K562 (cell line): ENCODE measurements at regions of chr2 and their contacts with region 1.

Region 1: GRCh38 chr2:15577071-15577735 is 14.5 kb upstream of the DDX1 start:
- DNase-seq: peak; percentile 69 to 94 (median 74)
- ATAC-seq: peak; percentile 97
- H3K4me3 ChIP-seq: no peak overlapping the region
- H3K27ac ChIP-seq: no peak overlapping the region
- H3K4me1 ChIP-seq: peaks cover 3 to 5% of the 10 kb centered on the region in 2 experiments; a peak in 3 of 5 replicates
- H3K27me3 ChIP-seq: no peaks in the 10 kb centered on the region
- CTCF ChIP-seq: peak; percentile 92 to 95 (median 92)
- EP300 ChIP-seq: no peak
- POLR2A ChIP-seq: no peak
- RAD21 ChIP-seq: peak; percentile 87 to 97

Region 2: GRCh38 chr2:14903709-14904374 is 673.4 kb before region 1 on chr2:
- CTCF ChIA-PET with region 1: no interaction called
- POLR2A ChIA-PET with region 1: no interaction called
- in situ Hi-C with region 1: loop called (anchors 25 kb)
- intact Hi-C with region 1: no loop called
- DNase-seq: peak; percentile 81 to 87 (median 84)
- ATAC-seq: peak; percentile 100
- H3K4me3 ChIP-seq: no peak overlapping the region
- H3K27ac ChIP-seq: no peak overlapping the region
- H3K4me1 ChIP-seq: no peaks in the 10 kb centered on the region
- H3K27me3 ChIP-seq: no peaks in the 10 kb centered on the region
- CTCF ChIP-seq: peak; percentile 98 to 100 (median 99)
- EP300 ChIP-seq: no peak
- POLR2A ChIP-seq: no peak
- RAD21 ChIP-seq: peak; percentile 66 to 83

Region 3: GRCh38 chr2:15302154-15302553 is 275.0 kb before region 1 on chr2:
- CTCF ChIA-PET with region 1: no interaction called
- POLR2A ChIA-PET with region 1: no interaction called
- in situ Hi-C with region 1: no loop called
- intact Hi-C with region 1: no loop called
- DNase-seq: peak; percentile 57 to 70 (median 66)
- ATAC-seq: peak; percentile 82
- H3K4me3 ChIP-seq: no peak overlapping the region
- H3K27ac ChIP-seq: peak overlapping the region; percentile 33; the same call in 1 of the 3 replicates
- H3K4me1 ChIP-seq: peaks cover 0 to 15% of the 10 kb centered on the region in 2 experiments; a peak in 3 of 5 replicates
- H3K27me3 ChIP-seq: no peaks in the 10 kb centered on the region
- CTCF ChIP-seq: no peak
- EP300 ChIP-seq: peak; percentile 42; the same call in 1 of the 2 replicates
- POLR2A ChIP-seq: no peak
- RAD21 ChIP-seq: no peak

Region 4: DNA sequence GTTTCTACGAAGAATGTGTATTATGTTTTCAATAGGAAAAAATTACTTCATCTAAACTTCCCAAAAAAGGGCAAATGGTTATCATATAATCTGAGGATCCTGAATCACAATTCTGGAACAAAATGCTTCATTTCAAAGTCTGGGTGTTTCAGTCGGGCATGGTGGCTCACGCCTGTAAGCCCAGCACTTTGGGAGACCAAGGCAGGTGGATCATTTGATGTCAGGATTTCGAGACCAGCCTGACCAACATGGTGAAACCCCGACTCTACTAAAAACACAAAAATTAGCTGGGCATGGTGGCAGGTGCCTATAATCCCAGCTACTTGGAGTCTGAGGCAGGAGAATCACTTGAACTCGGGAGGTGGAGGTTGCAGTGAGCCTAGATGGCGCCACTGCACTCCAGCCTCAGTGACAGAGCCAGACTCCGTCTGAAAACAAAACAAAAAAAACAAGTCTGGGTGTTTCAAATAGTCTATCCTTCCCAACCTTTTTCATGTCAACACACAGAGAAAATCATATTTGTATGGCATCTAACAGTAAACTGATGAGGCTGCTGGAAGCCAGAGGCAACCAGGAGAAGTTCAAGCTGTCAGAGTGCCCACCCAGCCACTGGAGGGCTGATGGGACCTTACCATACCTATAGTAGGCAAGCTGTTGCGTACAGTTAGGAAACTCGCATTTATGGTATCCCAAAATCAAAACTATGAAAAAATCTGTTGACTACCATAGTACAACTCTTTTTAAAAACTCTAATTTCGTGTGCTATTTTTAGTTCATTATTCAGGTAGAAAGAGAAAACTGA is 30.7 kb before region 1 on chr2:
- CTCF ChIA-PET with region 1: no interaction called
- POLR2A ChIA-PET with region 1: no interaction called
- in situ Hi-C with region 1: no loop called
- intact Hi-C with region 1: loop called (anchors 1 kb)
- DNase-seq: peak in 1 of 4 experiments; percentile 52
- ATAC-seq: peak; percentile 75
- H3K4me3 ChIP-seq: no peak overlapping the region
- H3K27ac ChIP-seq: no peak overlapping the region
- H3K4me1 ChIP-seq: peaks cover 0 to 7% of the 10 kb centered on the region in 2 experiments; a peak in 2 of 5 replicates
- H3K27me3 ChIP-seq: no peaks in the 10 kb centered on the region
- CTCF ChIP-seq: peak; percentile 40 to 69 (median 46); a peak in 5 of 6 replicates
- EP300 ChIP-seq: no peak
- POLR2A ChIP-seq: no peak
- RAD21 ChIP-seq: peak; percentile 26 to 55; a peak in 3 of 4 replicates

Region 5: GRCh38 chr2:15693926-15694588 is 116.9 kb after region 1 on chr2:
- CTCF ChIA-PET with region 1: no interaction called
- POLR2A ChIA-PET with region 1: no interaction called
- in situ Hi-C with region 1: no loop called
- intact Hi-C with region 1: no loop called
- DNase-seq: no peak
- ATAC-seq: no peak
- H3K4me3 ChIP-seq: no peak overlapping the region
- H3K27ac ChIP-seq: no peak overlapping the region
- H3K4me1 ChIP-seq: peaks cover 4 to 14% of the 10 kb centered on the region in 2 experiments; a peak in 4 of 5 replicates
- H3K27me3 ChIP-seq: peaks cover 20 to 74% of the 10 kb centered on the region in 2 experiments
- CTCF ChIP-seq: no peak
- EP300 ChIP-seq: no peak
- POLR2A ChIP-seq: no peak
- RAD21 ChIP-seq: no peak